ENCODE measurements at regions of chr9 and their contacts with region 1.

Region 1: GRCh38 chr9:76704593-76705204 is 59.5 kb upstream of the PCA3 start:
- DNase-seq: peak; percentile 91
- H3K4me3 ChIP-seq: no peak overlapping the region
- H3K27ac ChIP-seq: no peak overlapping the region
- H3K4me1 ChIP-seq: peaks cover 27% of the 10 kb centered on the region
- H3K27me3 ChIP-seq: peaks cover 0 to 15% of the 10 kb centered on the region in 2 experiments
- CTCF ChIP-seq: peak; percentile 30 to 61
- POLR2A ChIP-seq: no peak

Region 2: GRCh38 chr9:75200892-75201470 is 1503.7 kb before region 1 on chr9:
- CTCF ChIA-PET with region 1: no interaction called
- POLR2A ChIA-PET with region 1: no interaction called
- dilution Hi-C with region 1: no loop called
- intact Hi-C with region 1: loop called (anchors 5 kb)
- DNase-seq: peak; percentile 62
- H3K4me3 ChIP-seq: no peak overlapping the region
- H3K27ac ChIP-seq: no peak overlapping the region
- H3K4me1 ChIP-seq: no peaks in the 10 kb centered on the region
- H3K27me3 ChIP-seq: peaks cover 0 to 3% of the 10 kb centered on the region in 2 experiments
- CTCF ChIP-seq: peak in 1 of 2 donors; percentile 37
- POLR2A ChIP-seq: no peak

Region 3: DNA sequence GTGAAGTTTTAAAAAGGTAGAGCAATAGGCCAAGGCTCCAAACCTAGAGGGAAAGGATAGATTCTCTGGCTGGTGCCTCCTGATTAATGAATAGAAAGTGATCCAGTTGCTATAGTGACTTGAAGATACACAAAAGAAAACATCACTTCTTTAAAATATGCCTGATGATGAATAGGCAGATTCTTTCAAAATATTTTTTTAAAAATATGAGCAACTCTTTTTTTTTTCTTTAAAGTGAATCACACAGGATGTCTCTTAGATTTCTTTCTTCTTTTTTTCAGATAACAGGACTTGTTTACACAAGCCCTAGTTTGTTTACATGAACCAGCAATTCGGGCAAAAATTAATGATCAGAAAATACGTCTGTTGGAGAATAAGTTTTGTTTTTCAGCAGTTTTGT is 434.9 kb before region 1 on chr9:
- CTCF ChIA-PET with region 1: no interaction called
- POLR2A ChIA-PET with region 1: no interaction called
- dilution Hi-C with region 1: no loop called
- intact Hi-C with region 1: no loop called
- DNase-seq: peak; percentile 12
- H3K4me3 ChIP-seq: no peak overlapping the region
- H3K27ac ChIP-seq: no peak overlapping the region
- H3K4me1 ChIP-seq: no peaks in the 10 kb centered on the region
- H3K27me3 ChIP-seq: no peaks in the 10 kb centered on the region
- CTCF ChIP-seq: no peak
- POLR2A ChIP-seq: no peak

Region 4: GRCh38 chr9:76302947-76303940 is 401.5 kb before region 1 on chr9:
- CTCF ChIA-PET with region 1: no interaction called
- POLR2A ChIA-PET with region 1: no interaction called
- dilution Hi-C with region 1: no loop called
- intact Hi-C with region 1: loop called (anchors 2 kb)
- DNase-seq: peak; percentile 58
- H3K4me3 ChIP-seq: no peak overlapping the region
- H3K27ac ChIP-seq: no peak overlapping the region
- H3K4me1 ChIP-seq: no peaks in the 10 kb centered on the region
- H3K27me3 ChIP-seq: peaks cover 4 to 7% of the 10 kb centered on the region in 2 experiments
- CTCF ChIP-seq: peak; percentile 20 to 27
- POLR2A ChIP-seq: no peak

Region 5: GRCh38 chr9:76403352-76403751 is 301.3 kb before region 1 on chr9:
- CTCF ChIA-PET with region 1: interaction called, 19 read pairs
- POLR2A ChIA-PET with region 1: no interaction called
- dilution Hi-C with region 1: no loop called
- intact Hi-C with region 1: loop called (anchors 1 kb)
- DNase-seq: peak; percentile 83
- H3K4me3 ChIP-seq: no peak overlapping the region
- H3K27ac ChIP-seq: peak overlapping the region; percentile 32
- H3K4me1 ChIP-seq: peaks cover 5% of the 10 kb centered on the region
- H3K27me3 ChIP-seq: no peaks in the 10 kb centered on the region
- CTCF ChIP-seq: peak; percentile 34 to 42
- POLR2A ChIP-seq: no peak

Region 6: GRCh38 chr9:76451234-76451633 is 253.5 kb before region 1 on chr9:
- CTCF ChIA-PET with region 1: interaction called, 101 read pairs
- POLR2A ChIA-PET with region 1: no interaction called
- dilution Hi-C with region 1: no loop called
- intact Hi-C with region 1: loop called (anchors 1 kb)
- DNase-seq: no peak
- H3K4me3 ChIP-seq: no peak overlapping the region
- H3K27ac ChIP-seq: no peak overlapping the region
- H3K4me1 ChIP-seq: peaks cover 5% of the 10 kb centered on the region
- H3K27me3 ChIP-seq: no peaks in the 10 kb centered on the region
- CTCF ChIP-seq: no peak
- POLR2A ChIP-seq: no peak

Region 7: GRCh38 chr9:76516350-76516749 is 188.3 kb before region 1 on chr9:
- CTCF ChIA-PET with region 1: no interaction called
- POLR2A ChIA-PET with region 1: no interaction called
- dilution Hi-C with region 1: no loop called
- intact Hi-C with region 1: no loop called
- DNase-seq: no peak
- H3K4me3 ChIP-seq: no peak overlapping the region
- H3K27ac ChIP-seq: no peak overlapping the region
- H3K4me1 ChIP-seq: no peaks in the 10 kb centered on the region
- H3K27me3 ChIP-seq: no peaks in the 10 kb centered on the region
- CTCF ChIP-seq: no peak
- POLR2A ChIP-seq: no peak

Region 8: DNA sequence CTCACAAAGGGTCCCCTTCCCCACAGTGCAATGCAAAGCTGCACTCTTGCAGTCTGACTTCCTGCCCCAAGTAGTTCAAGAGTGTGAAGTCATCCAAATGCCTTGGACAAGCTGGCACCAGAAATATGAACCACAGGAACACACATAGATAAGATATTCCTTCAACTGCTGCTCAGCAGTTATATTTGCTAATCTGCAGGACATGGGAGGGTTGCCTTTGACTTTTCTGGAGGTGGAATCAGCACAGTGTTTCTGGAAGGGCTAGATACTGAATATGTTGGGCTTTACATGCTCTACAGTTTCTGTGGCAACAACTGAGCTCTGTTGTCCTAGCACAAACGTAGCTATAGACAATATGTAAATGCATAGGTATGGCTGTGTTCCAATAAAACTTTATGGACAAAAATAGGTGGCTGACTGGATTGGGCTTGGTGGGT is 37.2 kb before region 1 on chr9:
- CTCF ChIA-PET with region 1: interaction called, 140 read pairs
- POLR2A ChIA-PET with region 1: no interaction called
- dilution Hi-C with region 1: no loop called
- intact Hi-C with region 1: loop called (anchors 1 kb)
- DNase-seq: peak; percentile 69
- H3K4me3 ChIP-seq: no peak overlapping the region
- H3K27ac ChIP-seq: peak overlapping the region; percentile 70
- H3K4me1 ChIP-seq: peaks cover 36% of the 10 kb centered on the region
- H3K27me3 ChIP-seq: no peaks in the 10 kb centered on the region
- CTCF ChIP-seq: no peak
- POLR2A ChIP-seq: no peak

Region 9: GRCh38 chr9:76687861-76688391 is 16.8 kb before region 1 on chr9:
- CTCF ChIA-PET with region 1: interaction called, 18 read pairs
- POLR2A ChIA-PET with region 1: no interaction called
- dilution Hi-C with region 1: no loop called
- intact Hi-C with region 1: no loop called
- DNase-seq: peak; percentile 91
- H3K4me3 ChIP-seq: no peak overlapping the region
- H3K27ac ChIP-seq: peak overlapping the region; percentile 80
- H3K4me1 ChIP-seq: peaks cover 41% of the 10 kb centered on the region
- H3K27me3 ChIP-seq: no peaks in the 10 kb centered on the region
- CTCF ChIP-seq: no peak
- POLR2A ChIP-seq: peak; percentile 29

Region 10: DNA sequence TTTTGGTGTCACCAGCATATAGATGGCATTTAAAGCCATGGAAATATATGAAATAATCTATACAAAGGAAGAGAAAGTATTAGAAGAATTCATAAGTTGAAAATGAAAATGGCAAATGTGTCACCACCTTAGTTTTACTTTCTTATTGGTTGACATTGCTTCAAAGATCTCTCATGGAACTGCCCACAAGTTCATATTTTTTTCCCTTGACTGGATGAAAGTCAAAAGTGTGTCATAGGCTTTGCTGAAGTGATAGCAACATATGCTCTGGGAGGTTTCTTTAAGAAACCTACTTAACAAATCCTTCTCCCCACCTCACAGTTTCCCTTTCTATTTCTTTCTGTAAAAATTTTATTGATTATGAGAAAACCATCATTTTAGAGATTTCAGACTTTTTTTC is 599.8 kb after region 1 on chr9:
- CTCF ChIA-PET with region 1: no interaction called
- POLR2A ChIA-PET with region 1: no interaction called
- dilution Hi-C with region 1: no loop called
- intact Hi-C with region 1: no loop called
- DNase-seq: no peak
- H3K4me3 ChIP-seq: no peak overlapping the region
- H3K27ac ChIP-seq: no peak overlapping the region
- H3K4me1 ChIP-seq: no peaks in the 10 kb centered on the region
- H3K27me3 ChIP-seq: no peaks in the 10 kb centered on the region
- CTCF ChIP-seq: no peak
- POLR2A ChIP-seq: no peak